ENCODE measurements at regions of chr15 and their contacts with region 1.

Region 1: GRCh38 chr15:50315814-50316630 is 39.0 kb downstream of the GABPB1 start:
- DNase-seq: no peak
- ATAC-seq: peak; percentile 54
- H3K4me3 Mint-ChIP-seq: no peak overlapping the region
- H3K27ac Mint-ChIP-seq: no peak overlapping the region
- H3K4me1 Mint-ChIP-seq: peaks cover 7% of the 10 kb centered on the region
- H3K27me3 Mint-ChIP-seq: no peaks in the 10 kb centered on the region
- CTCF ChIP-seq: no peak

Region 2: DNA sequence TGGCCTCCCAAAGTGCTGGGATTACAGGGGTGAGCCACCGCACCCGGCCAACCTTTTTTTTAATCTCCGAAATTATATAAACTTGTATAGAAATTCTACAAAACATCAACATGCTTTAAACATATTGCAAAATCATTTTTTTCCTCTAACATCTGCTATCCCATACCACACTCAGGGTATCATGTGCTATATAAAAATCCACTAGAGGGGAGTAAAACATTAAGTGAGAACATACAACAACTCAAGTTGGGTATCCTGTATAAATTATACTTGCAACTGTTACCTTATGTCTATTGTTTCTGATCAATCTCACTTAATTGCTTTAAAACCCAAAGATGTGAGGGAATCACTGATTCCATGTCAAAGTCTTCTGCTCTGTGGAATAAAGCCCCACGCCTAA is 1598.6 kb before region 1 on chr15:
- CTCF ChIA-PET with region 1: no interaction called
- POLR2A ChIA-PET with region 1: no interaction called
- intact Hi-C with region 1: no loop called
- DNase-seq: no peak
- ATAC-seq: no peak
- H3K4me3 Mint-ChIP-seq: no peak overlapping the region
- H3K27ac Mint-ChIP-seq: no peak overlapping the region
- H3K4me1 Mint-ChIP-seq: no peaks in the 10 kb centered on the region
- H3K27me3 Mint-ChIP-seq: no peaks in the 10 kb centered on the region
- CTCF ChIP-seq: no peak

Region 3: GRCh38 chr15:50182219-50183013 is 133.6 kb before region 1 on chr15:
- CTCF ChIA-PET with region 1: interaction called, 5 read pairs
- POLR2A ChIA-PET with region 1: no interaction called
- intact Hi-C with region 1: loop called (anchors 1 kb)
- DNase-seq: peak; percentile 37
- ATAC-seq: peak; percentile 31
- H3K4me3 Mint-ChIP-seq: peak overlapping the region; percentile 90
- H3K27ac Mint-ChIP-seq: no peak overlapping the region
- H3K4me1 Mint-ChIP-seq: peaks cover 16% of the 10 kb centered on the region
- H3K27me3 Mint-ChIP-seq: peaks cover 20% of the 10 kb centered on the region
- CTCF ChIP-seq: no peak

Region 4: GRCh38 chr15:50328116-50328515 is 12.1 kb after region 1 on chr15:
- CTCF ChIA-PET with region 1: interaction called, 10 read pairs
- POLR2A ChIA-PET with region 1: interaction called, 4 read pairs
- intact Hi-C with region 1: no loop called
- DNase-seq: no peak
- ATAC-seq: no peak
- H3K4me3 Mint-ChIP-seq: no peak overlapping the region
- H3K27ac Mint-ChIP-seq: no peak overlapping the region
- H3K4me1 Mint-ChIP-seq: peaks cover 8% of the 10 kb centered on the region
- H3K27me3 Mint-ChIP-seq: no peaks in the 10 kb centered on the region
- CTCF ChIP-seq: no peak

Region 5: GRCh38 chr15:50577492-50577891 is 261.5 kb after region 1 on chr15:
- CTCF ChIA-PET with region 1: no interaction called
- POLR2A ChIA-PET with region 1: no interaction called
- intact Hi-C with region 1: no loop called
- DNase-seq: no peak
- ATAC-seq: no peak
- H3K4me3 Mint-ChIP-seq: no peak overlapping the region
- H3K27ac Mint-ChIP-seq: no peak overlapping the region
- H3K4me1 Mint-ChIP-seq: no peaks in the 10 kb centered on the region
- H3K27me3 Mint-ChIP-seq: no peaks in the 10 kb centered on the region
- CTCF ChIP-seq: no peak

Measured in activated B cell treated with CpG ODN at 0.5 μM for 24 hours (primary cell).